SK-N-SH (cell line): ENCODE measurements at regions of chr17 and their contacts with region 1.

Region 1: DNA sequence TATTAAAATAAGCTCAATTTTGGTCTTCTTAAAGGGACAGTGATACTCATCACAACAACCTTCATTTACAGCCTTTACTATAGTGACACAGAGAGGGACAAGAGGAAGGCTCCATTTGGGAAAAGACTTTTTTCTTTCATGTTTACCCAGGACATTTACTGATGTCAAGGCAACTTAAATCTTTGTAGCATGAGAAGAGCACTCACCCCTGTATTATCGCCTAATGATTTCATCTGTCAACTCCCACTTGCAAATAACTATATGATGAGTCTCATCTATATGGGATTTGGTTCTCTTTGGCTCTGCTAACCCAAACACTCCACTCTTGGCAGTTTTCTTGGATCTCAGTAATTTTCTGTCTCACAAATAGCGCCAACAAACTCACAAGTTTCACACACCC is 24.1 kb downstream of the BLMH start:
- DNase-seq: no peak
- H3K4me3 ChIP-seq: no peak overlapping the region
- H3K27ac ChIP-seq: no peak overlapping the region
- H3K4me1 ChIP-seq: peaks cover 6 to 7% of the 10 kb centered on the region in 2 experiments; a peak in 3 of 4 replicates
- H3K27me3 ChIP-seq: no peaks in the 10 kb centered on the region
- CTCF ChIP-seq: no peak
- EP300 ChIP-seq: no peak
- RAD21 ChIP-seq: no peak

Region 2: GRCh38 chr17:30256756-30257506 is 10.7 kb before region 1 on chr17:
- CTCF ChIA-PET with region 1: interaction called, 11 read pairs
- POLR2A ChIA-PET with region 1: no interaction called
- DNase-seq: peak; percentile 14
- H3K4me3 ChIP-seq: no peak overlapping the region
- H3K27ac ChIP-seq: 0 out of 4 replicates have a peak overlapping the region, but pooled peaks of 1 of the 2 experiments have one; percentile 16
- H3K4me1 ChIP-seq: peaks cover 0 to 2% of the 10 kb centered on the region in 2 experiments; a peak in 2 of 4 replicates
- H3K27me3 ChIP-seq: no peaks in the 10 kb centered on the region
- CTCF ChIP-seq: no peak
- EP300 ChIP-seq: no peak
- RAD21 ChIP-seq: no peak